K562 (cell line): ENCODE measurements at regions of chr12 and their contacts with region 1.

Region 1: DNA sequence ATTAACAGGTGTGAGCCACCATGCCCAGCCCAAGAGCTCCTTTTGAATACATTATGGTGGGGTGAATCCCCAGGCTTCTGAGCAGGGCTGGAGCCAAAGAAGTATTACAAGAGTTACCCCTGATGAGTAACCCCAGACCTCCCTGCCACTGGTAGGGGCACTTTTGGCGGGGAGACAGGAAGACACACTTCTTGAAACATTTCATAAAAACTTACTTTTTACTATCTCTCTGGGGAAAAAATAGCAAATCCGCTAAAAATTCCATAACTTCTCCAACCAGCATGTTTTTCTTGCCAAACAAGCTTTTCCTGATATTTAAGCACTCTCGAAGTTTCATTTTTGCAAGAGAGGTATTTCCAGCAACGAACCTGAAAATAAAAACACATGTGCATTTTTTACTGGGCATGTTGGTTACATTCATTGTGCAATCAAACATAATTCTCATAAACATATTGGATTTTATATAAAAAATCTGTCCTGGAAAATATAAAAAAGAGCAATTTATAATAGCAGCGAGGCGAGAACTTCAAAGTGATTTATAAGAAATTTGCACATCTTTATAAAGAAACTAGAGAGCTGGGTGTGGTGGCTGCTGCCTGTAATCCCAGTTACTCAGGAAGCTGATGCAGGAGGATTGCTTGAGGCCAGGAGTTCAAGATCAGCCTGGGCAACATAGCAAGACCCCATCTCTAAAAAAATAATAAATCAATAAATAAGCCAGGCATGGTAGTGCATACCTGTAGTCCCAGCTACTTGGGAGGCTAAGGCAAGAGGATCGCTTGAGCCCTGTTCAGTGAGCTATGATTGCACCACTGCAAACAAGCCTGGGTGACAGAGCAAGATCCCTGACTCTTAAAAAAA is 20.1 kb upstream of the NT5DC3 start:
- DNase-seq: no peak
- ATAC-seq: no peak
- H3K4me3 ChIP-seq: no peak overlapping the region
- H3K27ac ChIP-seq: no peak overlapping the region
- H3K4me1 ChIP-seq: peaks cover 0 to 9% of the 10 kb centered on the region in 2 experiments; a peak in 2 of 5 replicates
- H3K27me3 ChIP-seq: peaks cover 9 to 30% of the 10 kb centered on the region in 2 experiments; a peak in 4 of 5 replicates
- CTCF ChIP-seq: no peak
- EP300 ChIP-seq: no peak
- POLR2A ChIP-seq: no peak
- RAD21 ChIP-seq: no peak

Region 2: GRCh38 chr12:103586132-103586531 is 275.0 kb before region 1 on chr12:
- CTCF ChIA-PET with region 1: no interaction called
- POLR2A ChIA-PET with region 1: no interaction called
- in situ Hi-C with region 1: no loop called
- intact Hi-C with region 1: loop called (anchors 10 kb)
- DNase-seq: no peak
- ATAC-seq: no peak
- H3K4me3 ChIP-seq: no peak overlapping the region
- H3K27ac ChIP-seq: no peak overlapping the region
- H3K4me1 ChIP-seq: no peaks in the 10 kb centered on the region
- H3K27me3 ChIP-seq: no peaks in the 10 kb centered on the region
- CTCF ChIP-seq: peak in 1 of 3 experiments; percentile 11; a peak in 2 of 6 replicates
- EP300 ChIP-seq: no peak
- POLR2A ChIP-seq: no peak
- RAD21 ChIP-seq: peak; percentile 20 to 42; a peak in 3 of 4 replicates

Region 3: DNA sequence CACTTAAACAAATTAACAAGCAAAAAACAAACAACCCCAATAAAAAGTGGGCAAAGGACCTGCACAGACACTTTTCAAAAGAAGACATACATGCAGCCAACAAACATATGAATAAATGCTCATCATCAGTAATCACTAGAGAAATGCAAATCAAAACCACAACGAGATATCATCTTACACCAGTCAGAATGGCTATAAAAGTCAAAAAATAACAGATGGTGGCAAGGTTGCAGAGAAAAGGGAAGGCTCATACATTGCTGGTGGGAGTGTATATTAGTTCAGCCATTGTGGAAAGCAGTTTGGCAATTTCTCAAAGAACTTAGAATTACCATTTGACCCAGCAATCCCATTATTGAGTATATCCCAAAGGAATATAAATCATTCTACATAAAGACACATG is 14.5 kb after region 1 on chr12:
- CTCF ChIA-PET with region 1: no interaction called
- POLR2A ChIA-PET with region 1: no interaction called
- in situ Hi-C with region 1: no loop called
- intact Hi-C with region 1: no loop called
- DNase-seq: no peak
- ATAC-seq: no peak
- H3K4me3 ChIP-seq: no peak overlapping the region
- H3K27ac ChIP-seq: no peak overlapping the region
- H3K4me1 ChIP-seq: no peaks in the 10 kb centered on the region
- H3K27me3 ChIP-seq: peaks cover 7 to 12% of the 10 kb centered on the region in 2 experiments; a peak in 2 of 5 replicates
- CTCF ChIP-seq: no peak
- EP300 ChIP-seq: no peak
- POLR2A ChIP-seq: no peak
- RAD21 ChIP-seq: no peak

Region 4: DNA sequence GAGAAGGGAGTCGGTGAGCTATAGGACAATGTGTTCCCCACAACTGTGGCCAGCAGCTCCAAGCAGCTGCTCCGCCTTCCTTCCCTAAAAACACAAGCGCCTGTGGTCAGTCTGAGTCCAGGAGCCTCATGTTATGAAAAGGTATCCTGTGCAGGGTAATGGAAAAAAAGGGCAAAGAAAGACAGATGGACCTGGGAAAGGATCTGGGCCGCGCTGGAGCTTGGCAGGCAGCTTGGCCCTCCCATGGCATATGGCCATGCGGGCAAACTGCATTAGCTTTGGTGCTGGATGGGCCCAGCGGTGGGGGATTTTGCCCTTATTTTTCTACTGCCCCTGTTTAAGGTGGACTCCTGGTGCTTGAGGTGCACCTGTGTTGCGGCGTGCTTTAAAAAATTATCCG is 571.9 kb after region 1 on chr12:
- CTCF ChIA-PET with region 1: no interaction called
- POLR2A ChIA-PET with region 1: no interaction called
- in situ Hi-C with region 1: no loop called
- intact Hi-C with region 1: no loop called
- DNase-seq: no peak
- ATAC-seq: no peak
- H3K4me3 ChIP-seq: no peak overlapping the region
- H3K27ac ChIP-seq: no peak overlapping the region
- H3K4me1 ChIP-seq: no peaks in the 10 kb centered on the region; a peak in 1 of 5 replicates
- H3K27me3 ChIP-seq: peaks cover 3 to 29% of the 10 kb centered on the region in 2 experiments; a peak in 3 of 5 replicates
- CTCF ChIP-seq: no peak
- EP300 ChIP-seq: no peak
- POLR2A ChIP-seq: no peak
- RAD21 ChIP-seq: no peak